BJ (cell line): ENCODE measurements at regions of chr1 and their contacts with region 1.

Region 1: GRCh38 chr1:40078512-40079333 is 18.3 kb downstream of the PPT1 start:
- DNase-seq: no peak
- H3K4me3 ChIP-seq: no peak overlapping the region
- H3K27me3 ChIP-seq: no peaks in the 10 kb centered on the region
- CTCF ChIP-seq: peak; percentile 82

Region 2: GRCh38 chr1:39344394-39345154 is 734.1 kb before region 1 on chr1:
- CTCF ChIA-PET with region 1: no interaction called
- POLR2A ChIA-PET with region 1: no interaction called
- DNase-seq: no peak
- H3K4me3 ChIP-seq: no peak overlapping the region
- H3K27me3 ChIP-seq: no peaks in the 10 kb centered on the region
- CTCF ChIP-seq: no peak

Region 3: GRCh38 chr1:40315239-40315794 is 236.6 kb after region 1 on chr1:
- CTCF ChIA-PET with region 1: interaction called, 16 read pairs
- POLR2A ChIA-PET with region 1: no interaction called
- DNase-seq: peak; percentile 12
- H3K4me3 ChIP-seq: peak overlapping the region; percentile 26
- H3K27me3 ChIP-seq: peaks cover 25% of the 10 kb centered on the region
- CTCF ChIP-seq: peak; percentile 96

Region 4: DNA sequence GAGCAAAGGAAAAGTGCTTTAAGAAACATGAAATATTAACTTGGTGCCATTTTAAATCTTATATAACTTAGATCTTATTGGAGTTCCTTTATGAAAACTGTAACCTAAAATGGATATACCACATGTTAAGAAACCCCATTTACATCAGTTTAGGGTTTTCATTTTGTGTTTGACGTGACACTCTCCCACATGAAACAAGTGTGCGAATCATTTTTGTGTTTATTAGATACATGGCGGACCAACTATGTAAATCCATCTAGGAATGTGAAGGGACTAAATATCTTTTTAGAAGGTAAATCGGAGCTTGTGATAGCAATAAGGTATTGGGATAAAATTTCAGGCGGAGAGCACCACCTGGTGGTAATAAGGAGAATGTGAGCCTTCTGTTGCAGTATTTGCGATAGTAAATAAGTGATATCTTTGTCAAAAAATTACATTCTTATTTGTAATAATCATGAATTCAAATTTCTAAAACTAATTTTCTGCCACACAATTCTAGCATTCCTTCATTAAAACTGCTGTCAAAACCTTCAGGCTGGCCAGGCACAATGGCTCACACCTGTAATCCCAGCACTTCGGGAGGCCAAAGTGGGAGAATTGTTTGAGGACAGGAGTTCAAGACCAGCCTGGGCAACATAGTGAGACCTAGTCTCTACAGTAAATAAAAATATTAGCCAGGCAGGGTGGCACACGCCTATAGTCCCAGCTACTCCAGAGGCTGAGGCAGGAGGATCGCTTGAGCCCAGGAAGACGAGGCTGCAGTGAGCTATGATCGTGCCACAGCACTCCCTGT is 326.1 kb after region 1 on chr1:
- CTCF ChIA-PET with region 1: interaction called, 16 read pairs
- POLR2A ChIA-PET with region 1: no interaction called
- DNase-seq: no peak
- H3K4me3 ChIP-seq: no peak overlapping the region
- H3K27me3 ChIP-seq: no peaks in the 10 kb centered on the region
- CTCF ChIP-seq: peak; percentile 78